HEK293 (cell line): ENCODE measurements at regions of chr17 and their contacts with region 1.

Region 1: DNA sequence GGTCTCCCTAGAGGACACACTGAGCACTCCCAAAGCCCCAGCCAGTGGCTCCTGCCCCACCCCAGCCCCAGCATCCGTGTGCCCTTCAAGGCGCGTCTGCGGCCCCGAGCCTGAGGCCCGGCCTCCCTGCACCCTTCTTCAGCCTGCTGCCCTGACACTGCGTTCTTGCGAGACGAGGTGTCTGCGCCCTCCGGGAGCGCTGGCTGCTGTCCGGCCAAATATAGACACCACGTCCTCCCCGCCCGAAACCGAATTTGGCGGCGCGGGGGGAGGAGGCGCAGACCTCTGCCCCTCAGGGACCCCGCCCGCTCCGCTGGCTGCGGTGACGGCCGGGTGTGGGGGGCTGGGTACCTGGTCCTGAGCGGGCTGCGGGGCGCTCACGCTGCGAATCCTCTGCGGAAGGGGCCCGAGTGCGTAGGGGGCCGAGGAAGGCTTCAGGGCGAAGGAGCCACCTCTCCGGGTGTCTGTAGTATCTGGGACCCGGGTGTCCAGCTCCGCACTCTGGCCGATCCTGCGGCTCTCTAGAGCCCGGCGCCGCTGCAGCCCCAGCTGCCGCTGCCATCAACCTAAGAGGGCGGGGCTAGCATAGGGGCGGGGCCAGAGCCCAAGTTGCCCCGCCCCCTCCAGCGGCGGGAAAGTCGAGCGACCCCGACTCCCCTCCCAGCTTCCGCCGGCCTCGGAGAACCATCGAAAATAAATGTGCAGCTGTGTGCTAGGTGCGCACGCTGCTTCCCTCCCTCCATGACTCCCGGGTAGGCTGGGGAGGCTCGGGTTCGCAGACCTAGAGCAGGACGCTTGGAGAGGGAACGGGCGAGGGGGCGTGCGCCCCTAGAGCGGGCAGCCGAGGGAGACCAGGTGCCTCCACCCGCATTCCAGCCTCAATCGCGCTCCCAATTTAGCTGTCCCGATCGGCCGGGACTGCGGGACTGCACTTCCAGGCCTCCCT is at the start of gene CORO6:
- H3K4me3 ChIP-seq: peak within 1 kb of the TSS; percentile 75
- H3K27ac ChIP-seq: peak within 1 kb of the TSS; percentile 40; the same call in 1 of the 2 replicates
- H3K4me1 ChIP-seq: peaks cover 12% of the 10 kb centered on the region
- CTCF ChIP-seq: peak; percentile 19; the same call in 1 of the 2 replicates

Region 2: DNA sequence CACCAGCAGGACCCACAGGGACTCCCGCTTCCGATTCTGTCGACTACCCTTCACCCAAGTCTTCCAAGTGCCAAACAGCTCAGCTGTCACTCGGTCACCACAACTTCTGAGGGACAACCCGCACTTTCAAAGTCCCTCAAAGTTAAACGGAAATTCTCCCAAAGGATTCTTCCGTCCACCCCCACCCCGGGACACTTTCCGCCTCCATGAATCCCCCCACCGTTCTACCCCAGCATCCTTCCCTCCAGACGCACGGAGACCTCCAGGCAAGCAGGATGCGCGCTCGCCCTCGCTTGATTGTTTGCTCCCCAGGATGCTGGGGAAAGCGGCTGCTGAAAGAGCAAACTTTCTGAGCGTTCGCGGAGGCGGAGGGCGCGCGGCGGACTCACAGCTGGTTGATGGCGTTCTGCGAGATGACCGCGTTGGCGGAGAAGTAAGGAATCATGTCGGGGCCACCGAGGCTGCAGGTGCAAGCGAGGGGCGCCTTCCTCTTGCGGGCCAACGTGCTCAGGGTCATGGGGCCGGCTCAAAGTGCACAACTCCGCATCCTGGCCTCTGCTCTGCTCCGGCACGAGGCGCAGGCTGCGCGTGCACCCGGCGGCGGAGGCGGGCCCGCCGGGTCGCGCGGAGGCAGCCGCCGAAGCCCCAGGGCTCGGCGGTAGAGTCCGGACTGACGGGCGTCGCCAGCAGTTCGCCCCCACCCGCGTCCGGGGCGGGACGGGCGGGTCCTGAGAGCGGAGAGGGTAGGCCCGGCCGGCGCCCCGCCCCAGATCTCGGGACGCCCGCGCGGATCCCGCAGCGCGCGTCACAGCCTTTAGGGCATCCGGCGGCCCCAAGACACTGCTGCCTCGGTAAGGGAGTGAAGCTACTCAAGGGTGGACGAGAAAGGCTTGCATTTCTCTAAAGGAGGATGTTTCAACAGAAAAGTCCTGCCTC is 138.4 kb after region 1 on chr17:
- CTCF ChIA-PET with region 1: interaction called, 3 read pairs
- POLR2A ChIA-PET with region 1: interaction called, 11 read pairs
- H3K4me3 ChIP-seq: peak overlapping the region; percentile 86
- H3K27ac ChIP-seq: peak overlapping the region; percentile 81
- H3K4me1 ChIP-seq: peaks cover 22% of the 10 kb centered on the region
- CTCF ChIP-seq: no peak; the same call in 1 of the 2 replicates